AG04449 (cell line): ENCODE measurements at regions of chr22 and their contacts with region 1.

Region 1: GRCh38 chr22:26679003-26679629 is 21.7 kb downstream of the MIAT start:
- DNase-seq: no peak
- H3K4me3 ChIP-seq: no peak overlapping the region
- CTCF ChIP-seq: peak; percentile 87

Region 2: DNA sequence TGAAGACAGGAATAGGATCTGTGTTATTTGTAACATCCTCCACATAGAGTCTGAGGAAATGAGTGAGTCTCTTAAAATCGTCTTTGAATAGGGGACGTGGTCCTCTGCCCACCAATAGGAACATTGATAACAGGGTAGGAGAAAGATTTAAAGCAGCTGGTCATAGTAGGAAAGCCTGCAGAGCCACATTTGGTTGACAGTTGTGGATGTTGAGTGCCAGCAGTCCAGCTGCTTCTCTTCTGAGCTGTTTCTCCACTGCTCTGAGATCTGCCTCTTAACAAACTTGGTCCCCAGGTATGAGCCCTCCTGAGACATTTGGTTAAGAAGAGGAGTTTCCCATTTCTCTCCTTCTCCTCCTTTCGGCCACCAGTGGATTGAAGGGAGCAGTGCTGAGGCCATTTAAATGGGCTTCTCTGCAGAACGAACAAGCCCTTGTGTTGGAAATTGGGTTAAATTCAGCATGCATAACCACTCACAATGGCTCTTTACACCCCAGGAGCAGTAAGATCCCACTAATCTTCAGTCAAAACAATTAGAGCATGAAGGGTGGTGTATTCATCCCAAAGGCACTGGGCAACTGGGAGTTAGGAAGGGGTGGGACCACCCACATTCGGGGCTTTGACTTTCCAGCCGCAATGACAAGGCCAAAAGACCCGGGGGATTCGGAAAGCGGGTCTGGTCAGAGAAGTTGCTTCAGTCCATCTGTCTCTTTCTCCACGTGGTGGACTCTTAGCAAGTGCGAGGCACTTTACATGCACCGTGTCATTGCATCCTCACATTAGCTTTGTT is 10.6 kb after region 1 on chr22:
- CTCF ChIA-PET with region 1: interaction called, 24 read pairs
- POLR2A ChIA-PET with region 1: no interaction called
- DNase-seq: no peak
- H3K4me3 ChIP-seq: no peak overlapping the region
- CTCF ChIP-seq: no peak

Region 3: GRCh38 chr22:26711205-26711963 is 32.3 kb after region 1 on chr22:
- CTCF ChIA-PET with region 1: interaction called, 12 read pairs
- POLR2A ChIA-PET with region 1: no interaction called
- DNase-seq: no peak
- H3K4me3 ChIP-seq: no peak overlapping the region
- CTCF ChIP-seq: no peak

Region 4: DNA sequence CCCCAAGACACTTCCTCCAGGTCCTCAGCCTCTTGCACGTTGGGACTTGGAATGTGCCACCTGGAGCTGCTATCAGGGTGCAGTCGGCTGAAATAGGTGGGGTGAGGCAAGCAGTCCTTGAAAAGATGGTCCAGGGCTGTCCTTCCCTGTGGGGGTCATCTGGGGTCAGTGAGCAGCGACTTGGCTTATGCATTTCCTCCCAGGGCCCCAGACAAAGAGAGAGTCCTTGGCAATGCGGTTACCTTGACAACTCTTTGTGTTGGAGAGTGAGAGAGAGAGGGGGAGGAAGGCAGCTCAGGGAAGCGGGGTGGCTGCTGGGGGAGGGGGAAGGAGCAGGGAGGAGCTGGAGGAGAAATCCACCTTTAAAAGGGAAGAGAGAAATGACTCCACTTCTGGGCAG is 72.1 kb after region 1 on chr22:
- CTCF ChIA-PET with region 1: interaction called, 24 read pairs
- POLR2A ChIA-PET with region 1: no interaction called
- DNase-seq: no peak
- H3K4me3 ChIP-seq: no peak overlapping the region
- CTCF ChIP-seq: no peak

Region 5: GRCh38 chr22:26756675-26757293 is 77.7 kb after region 1 on chr22:
- CTCF ChIA-PET with region 1: interaction called, 24 read pairs
- POLR2A ChIA-PET with region 1: no interaction called
- DNase-seq: no peak
- H3K4me3 ChIP-seq: peak overlapping the region; percentile 43
- CTCF ChIP-seq: peak; percentile 87